ENCODE measurements at regions of chr10 and their contacts with region 1.

Region 1: DNA sequence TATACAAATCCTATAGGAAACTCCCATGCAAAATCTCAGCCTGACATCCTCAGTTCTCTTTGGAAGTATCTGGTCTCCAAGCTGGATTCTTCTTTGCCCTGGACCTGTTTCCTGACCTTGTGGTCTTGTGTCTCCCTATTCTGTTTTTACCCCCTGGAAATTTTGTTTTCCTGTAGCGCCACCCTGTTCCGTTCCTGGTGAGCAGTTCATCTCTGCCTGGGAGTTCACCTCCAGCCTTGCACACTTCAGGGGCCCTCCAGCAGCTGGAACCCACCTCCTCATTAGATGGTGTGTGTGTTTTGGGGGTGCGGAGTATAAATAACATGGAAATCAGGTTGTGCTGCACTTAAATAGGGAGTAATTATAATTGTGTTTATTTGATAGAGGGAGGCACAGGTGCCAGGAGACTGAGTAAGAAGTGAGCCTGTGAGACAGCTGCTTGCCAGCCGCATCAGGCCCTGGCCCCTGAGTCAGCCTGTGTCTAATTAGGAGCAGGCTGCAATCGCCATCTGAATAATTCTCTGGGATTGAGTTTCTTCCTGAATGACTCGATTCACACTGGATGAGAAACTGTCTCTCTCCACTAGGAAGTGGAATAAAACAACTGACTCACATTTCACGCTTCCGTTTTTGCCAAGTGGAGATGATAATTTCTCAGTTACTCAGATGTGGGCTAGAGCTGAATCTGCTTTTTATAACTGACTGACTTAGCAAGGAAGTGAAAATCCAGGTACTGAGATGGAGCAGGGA is 69.4 kb upstream of the HECTD2 start:
- DNase-seq: peak; percentile 81
- H3K4me3 ChIP-seq: no peak overlapping the region
- H3K27ac ChIP-seq: peak overlapping the region; percentile 18
- H3K4me1 ChIP-seq: peaks cover 15% of the 10 kb centered on the region
- H3K27me3 ChIP-seq: no peaks in the 10 kb centered on the region
- CTCF ChIP-seq: no peak

Region 2: GRCh38 chr10:90885176-90885575 is 455.6 kb before region 1 on chr10:
- CTCF ChIA-PET with region 1: interaction called, 10 read pairs
- POLR2A ChIA-PET with region 1: no interaction called
- intact Hi-C with region 1: no loop called
- DNase-seq: no peak
- H3K4me3 ChIP-seq: no peak overlapping the region
- H3K27ac ChIP-seq: no peak overlapping the region
- H3K4me1 ChIP-seq: no peaks in the 10 kb centered on the region
- H3K27me3 ChIP-seq: no peaks in the 10 kb centered on the region
- CTCF ChIP-seq: no peak

Region 3: DNA sequence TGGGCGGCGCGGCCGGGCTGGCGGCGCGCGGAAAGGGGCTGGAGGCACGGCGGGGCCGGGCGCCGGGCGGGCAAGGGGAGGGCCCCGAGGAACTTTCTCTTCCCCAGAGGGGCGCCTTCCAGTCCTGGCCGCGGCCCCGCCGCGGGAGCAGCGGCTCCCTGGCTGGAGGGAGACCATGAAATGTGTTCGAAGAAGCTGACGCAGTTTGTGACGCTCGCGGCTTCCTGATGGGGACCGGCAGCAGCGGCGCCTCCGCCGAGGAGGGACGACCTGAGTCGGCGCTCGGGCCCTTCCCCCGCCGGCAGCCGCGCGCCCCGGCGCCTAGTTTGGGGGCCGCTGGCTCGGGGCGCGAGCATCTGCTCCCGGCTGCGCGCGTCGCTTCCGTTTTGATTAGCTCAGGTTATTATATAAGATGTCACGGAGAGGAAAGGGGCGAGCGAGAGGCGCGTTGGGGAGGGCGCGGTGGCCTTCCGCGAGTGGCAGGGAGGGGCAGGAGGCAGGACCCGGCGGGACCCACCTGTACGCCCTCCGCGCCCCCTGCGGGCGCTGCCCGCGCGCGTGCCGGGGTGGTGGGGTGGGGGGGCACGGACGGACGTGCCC is 177.4 kb before region 1 on chr10:
- CTCF ChIA-PET with region 1: no interaction called
- POLR2A ChIA-PET with region 1: interaction called, 18 read pairs
- intact Hi-C with region 1: no loop called
- DNase-seq: peak; percentile 52
- H3K4me3 ChIP-seq: peak overlapping the region; percentile 66
- H3K27ac ChIP-seq: no peak overlapping the region
- H3K4me1 ChIP-seq: peaks cover 6% of the 10 kb centered on the region
- H3K27me3 ChIP-seq: peaks cover 56% of the 10 kb centered on the region
- CTCF ChIP-seq: no peak